GM12878 (cell line): ENCODE measurements at regions of chr1 and their contacts with region 1.

Region 1: GRCh38 chr1:157595356-157595755 is 2.5 kb downstream of the FCRL4 start:
- DNase-seq: peak; percentile 78
- ATAC-seq: peak; percentile 83
- H3K4me3 ChIP-seq: no peak overlapping the region
- H3K27ac ChIP-seq: no peak overlapping the region
- H3K4me1 ChIP-seq: peaks cover 35% of the 10 kb centered on the region
- H3K27me3 ChIP-seq: no peaks in the 10 kb centered on the region
- CTCF ChIP-seq: no peak
- EP300 ChIP-seq: peak; percentile 84 to 91
- POLR2A ChIP-seq: no peak
- RAD21 ChIP-seq: no peak

Region 2: DNA sequence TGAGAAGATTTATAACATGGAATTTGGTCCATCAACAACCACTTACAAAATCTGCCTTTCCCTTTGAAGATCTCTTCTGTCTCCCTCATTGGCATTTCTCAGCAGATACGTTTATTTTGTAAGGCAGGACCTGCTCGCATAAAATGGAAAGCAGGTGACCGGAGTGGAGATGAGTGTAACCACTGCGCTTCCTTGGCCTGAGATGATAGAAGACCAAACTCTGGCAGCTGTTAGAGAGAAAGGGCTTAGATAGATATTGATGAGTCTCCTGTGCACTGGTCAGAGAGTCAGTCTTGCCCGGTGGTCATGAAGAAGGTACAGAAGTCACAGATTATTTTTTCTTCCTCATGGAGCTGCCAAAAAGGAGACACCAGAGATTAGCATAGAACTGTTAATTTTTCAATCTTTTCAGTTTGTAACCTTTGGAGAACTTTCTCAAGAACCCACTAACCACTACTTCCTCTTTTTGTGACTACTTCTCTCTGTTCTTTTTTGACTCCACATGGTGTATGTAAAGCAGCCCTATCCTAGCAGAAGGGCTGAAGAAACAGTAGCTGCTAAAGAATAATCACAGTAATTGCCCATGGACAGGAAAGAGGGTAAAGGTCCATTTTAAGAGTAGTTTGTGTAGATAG is 57.6 kb after region 1 on chr1:
- CTCF ChIA-PET with region 1: no interaction called
- POLR2A ChIA-PET with region 1: no interaction called
- RAD21 ChIA-PET with region 1: no interaction called
- SMC1A ChIA-PET with region 1: interaction called, 3 read pairs
- in situ Hi-C with region 1: no loop called
- intact Hi-C with region 1: loop called (anchors 2 kb)
- DNase-seq: peak; percentile 44
- ATAC-seq: peak; percentile 99
- H3K4me3 ChIP-seq: no peak overlapping the region
- H3K27ac ChIP-seq: no peak overlapping the region
- H3K4me1 ChIP-seq: peaks cover 7% of the 10 kb centered on the region; the same call in 1 of the 2 replicates
- H3K27me3 ChIP-seq: peaks cover 2 to 11% of the 10 kb centered on the region in 2 experiments; a peak in 3 of 4 replicates
- CTCF ChIP-seq: no peak
- EP300 ChIP-seq: peak; percentile 52 to 66; a peak in 1 of 4 replicates
- POLR2A ChIP-seq: no peak
- RAD21 ChIP-seq: no peak